Activated B cell treated with CpG ODN at 0.5 μM for 24 hours (primary cell): ENCODE measurements at regions of chr10 and their contacts with region 1.

Region 1: GRCh38 chr10:68074775-68075549 is at the start of gene HERC4:
- DNase-seq: peak; percentile 91
- ATAC-seq: peak; percentile 92
- H3K4me3 Mint-ChIP-seq: peak within 1 kb of the TSS; percentile 97
- H3K27ac Mint-ChIP-seq: peak within 1 kb of the TSS; percentile 97
- H3K4me1 Mint-ChIP-seq: peaks cover 39% of the 10 kb centered on the region
- H3K27me3 Mint-ChIP-seq: no peaks in the 10 kb centered on the region
- CTCF ChIP-seq: no peak
- total RNA-seq, gene HERC4: 65.3 and 84.2 TPM in 2 replicates

Region 2: GRCh38 chr10:67849331-67850011 is 225.5 kb before region 1 on chr10:
- CTCF ChIA-PET with region 1: no interaction called
- POLR2A ChIA-PET with region 1: interaction called, 4 read pairs
- intact Hi-C with region 1: loop called (anchors 1 kb)
- DNase-seq: peak; percentile 90
- ATAC-seq: peak; percentile 95
- H3K4me3 Mint-ChIP-seq: peak overlapping the region; percentile 94
- H3K27ac Mint-ChIP-seq: peak overlapping the region; percentile 96
- H3K4me1 Mint-ChIP-seq: peaks cover 13% of the 10 kb centered on the region
- H3K27me3 Mint-ChIP-seq: no peaks in the 10 kb centered on the region
- CTCF ChIP-seq: no peak

Region 3: DNA sequence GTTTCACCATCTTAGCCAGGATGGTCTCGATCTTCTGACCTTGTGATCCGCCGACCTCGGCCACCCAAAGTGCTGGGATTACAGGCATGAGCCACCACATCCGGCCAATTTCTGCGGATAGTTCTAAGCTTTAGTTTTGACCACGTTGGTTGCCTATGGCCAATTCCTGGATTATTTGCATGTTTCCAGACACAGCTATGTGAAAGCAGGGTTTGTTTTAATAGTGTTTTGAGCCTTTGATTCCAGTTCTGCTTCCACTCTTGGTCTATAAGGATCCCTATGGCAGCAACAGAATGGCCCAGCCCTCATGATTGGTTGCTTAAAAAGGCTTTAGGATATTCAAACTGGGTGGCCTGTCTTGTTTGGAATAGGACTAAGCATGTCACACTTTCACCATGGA is 171.4 kb before region 1 on chr10:
- CTCF ChIA-PET with region 1: no interaction called
- POLR2A ChIA-PET with region 1: interaction called, 17 read pairs
- intact Hi-C with region 1: no loop called
- DNase-seq: no peak
- ATAC-seq: no peak
- H3K4me3 Mint-ChIP-seq: no peak overlapping the region
- H3K27ac Mint-ChIP-seq: no peak overlapping the region
- H3K4me1 Mint-ChIP-seq: no peaks in the 10 kb centered on the region
- H3K27me3 Mint-ChIP-seq: no peaks in the 10 kb centered on the region
- CTCF ChIP-seq: no peak

Region 4: DNA sequence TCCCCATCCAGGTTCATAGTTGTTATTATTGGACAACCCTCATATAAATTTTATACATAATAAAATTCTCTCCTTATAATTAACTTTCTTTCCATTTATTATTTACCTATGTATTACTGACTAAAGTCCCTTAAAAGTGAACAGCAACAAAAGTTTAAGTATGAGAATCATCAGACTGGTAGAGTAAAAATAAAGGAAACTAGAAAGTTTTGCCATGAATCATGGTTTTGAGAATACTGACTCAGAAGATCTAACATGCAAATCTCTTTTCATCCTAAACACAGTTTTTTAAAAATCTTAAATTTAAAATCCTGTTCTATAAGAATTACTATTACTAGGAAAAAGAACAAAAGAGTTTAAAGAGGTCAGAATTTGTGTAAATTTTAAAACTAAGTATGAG is 31.9 kb before region 1 on chr10:
- CTCF ChIA-PET with region 1: no interaction called
- POLR2A ChIA-PET with region 1: interaction called, 4 read pairs
- intact Hi-C with region 1: loop called (anchors 2 kb)
- DNase-seq: no peak
- ATAC-seq: no peak
- H3K4me3 Mint-ChIP-seq: no peak overlapping the region
- H3K27ac Mint-ChIP-seq: no peak overlapping the region
- H3K4me1 Mint-ChIP-seq: peaks cover 35% of the 10 kb centered on the region
- H3K27me3 Mint-ChIP-seq: no peaks in the 10 kb centered on the region
- CTCF ChIP-seq: no peak

Region 5: GRCh38 chr10:68192113-68192512 is 117.2 kb after region 1 on chr10:
- CTCF ChIA-PET with region 1: no interaction called
- POLR2A ChIA-PET with region 1: no interaction called
- intact Hi-C with region 1: no loop called
- DNase-seq: no peak
- ATAC-seq: no peak
- H3K4me3 Mint-ChIP-seq: no peak overlapping the region
- H3K27ac Mint-ChIP-seq: no peak overlapping the region
- H3K4me1 Mint-ChIP-seq: no peaks in the 10 kb centered on the region
- H3K27me3 Mint-ChIP-seq: peaks cover 13% of the 10 kb centered on the region
- CTCF ChIP-seq: no peak

Region 6: GRCh38 chr10:68301790-68302502 is 227.0 kb after region 1 on chr10:
- CTCF ChIA-PET with region 1: no interaction called
- POLR2A ChIA-PET with region 1: interaction called, 4 read pairs
- intact Hi-C with region 1: loop called (anchors 2 kb)
- DNase-seq: no peak
- ATAC-seq: peak; percentile 62
- H3K4me3 Mint-ChIP-seq: no peak overlapping the region
- H3K27ac Mint-ChIP-seq: peak overlapping the region; percentile 90
- H3K4me1 Mint-ChIP-seq: peaks cover 31% of the 10 kb centered on the region
- H3K27me3 Mint-ChIP-seq: no peaks in the 10 kb centered on the region
- CTCF ChIP-seq: no peak

Region 7: GRCh38 chr10:68526626-68527307 is 451.8 kb after region 1 on chr10:
- CTCF ChIA-PET with region 1: no interaction called
- POLR2A ChIA-PET with region 1: no interaction called
- intact Hi-C with region 1: loop called (anchors 1 kb)
- DNase-seq: no peak
- ATAC-seq: no peak
- H3K4me3 Mint-ChIP-seq: peak overlapping the region; percentile 86
- H3K27ac Mint-ChIP-seq: peak overlapping the region; percentile 73
- H3K4me1 Mint-ChIP-seq: peaks cover 14% of the 10 kb centered on the region
- H3K27me3 Mint-ChIP-seq: no peaks in the 10 kb centered on the region
- CTCF ChIP-seq: no peak

Region 8: DNA sequence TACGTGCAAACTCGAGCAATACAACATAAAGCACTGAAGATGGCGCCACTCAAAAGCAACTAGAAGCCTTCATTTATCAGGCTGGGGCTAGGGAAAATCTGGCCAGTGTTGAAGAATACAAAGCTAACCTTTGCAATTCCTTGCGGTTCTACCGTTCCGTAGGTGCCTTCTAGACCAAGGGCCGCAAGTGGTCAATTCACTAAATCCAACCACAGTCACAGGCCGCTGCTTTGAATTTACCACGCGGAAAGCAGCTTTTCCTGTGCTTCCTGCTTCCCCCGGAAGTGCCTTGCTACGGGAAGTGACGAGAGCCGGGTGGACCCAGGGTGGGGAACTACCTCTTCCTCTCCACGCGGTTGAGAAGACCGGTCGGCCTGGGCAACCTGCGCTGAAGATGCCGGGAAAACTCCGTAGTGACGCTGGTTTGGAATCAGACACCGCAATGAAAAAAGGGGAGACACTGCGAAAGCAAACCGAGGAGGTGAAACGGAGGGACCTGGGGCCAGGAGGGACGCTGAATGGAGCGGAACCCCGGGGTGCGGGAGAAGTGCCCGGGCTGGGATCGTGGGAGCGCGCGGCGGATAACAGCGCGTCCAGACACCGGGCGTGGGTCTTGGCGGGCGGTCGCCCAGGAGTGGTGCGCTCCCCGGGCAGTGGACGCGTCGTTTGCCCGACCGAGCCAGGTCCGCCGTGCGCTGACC is 881.0 kb after region 1 on chr10 and contains the start of gene DDX21:
- CTCF ChIA-PET with region 1: no interaction called
- POLR2A ChIA-PET with region 1: no interaction called
- intact Hi-C with region 1: loop called (anchors 2 kb)
- DNase-seq: peak; percentile 79
- ATAC-seq: peak; percentile 82
- H3K4me3 Mint-ChIP-seq: peak within 1 kb of the TSS; percentile 100
- H3K27ac Mint-ChIP-seq: peak within 1 kb of the TSS; percentile 100
- H3K4me1 Mint-ChIP-seq: peaks cover 41% of the 10 kb centered on the region
- H3K27me3 Mint-ChIP-seq: no peaks in the 10 kb centered on the region
- CTCF ChIP-seq: no peak
- total RNA-seq, gene DDX21: 111 and 112 TPM in 2 replicates